Mucosa of descending colon (tissue), 3 donors: ENCODE measurements at regions of chr9 and their contacts with region 1.

Region 1: GRCh38 chr9:136327313-136327974 is at the start of gene GPSM1:
- DNase-seq: no peak
- ATAC-seq: peak; percentile 33
- H3K4me3 ChIP-seq: no peak within 1 kb of the TSS
- H3K4me1 ChIP-seq: peaks cover 5% of the 10 kb centered on the region
- CTCF ChIP-seq: no peak
- total RNA-seq, gene GPSM1: 2.4 to 15.0 (median 4.2) TPM

Region 2: DNA sequence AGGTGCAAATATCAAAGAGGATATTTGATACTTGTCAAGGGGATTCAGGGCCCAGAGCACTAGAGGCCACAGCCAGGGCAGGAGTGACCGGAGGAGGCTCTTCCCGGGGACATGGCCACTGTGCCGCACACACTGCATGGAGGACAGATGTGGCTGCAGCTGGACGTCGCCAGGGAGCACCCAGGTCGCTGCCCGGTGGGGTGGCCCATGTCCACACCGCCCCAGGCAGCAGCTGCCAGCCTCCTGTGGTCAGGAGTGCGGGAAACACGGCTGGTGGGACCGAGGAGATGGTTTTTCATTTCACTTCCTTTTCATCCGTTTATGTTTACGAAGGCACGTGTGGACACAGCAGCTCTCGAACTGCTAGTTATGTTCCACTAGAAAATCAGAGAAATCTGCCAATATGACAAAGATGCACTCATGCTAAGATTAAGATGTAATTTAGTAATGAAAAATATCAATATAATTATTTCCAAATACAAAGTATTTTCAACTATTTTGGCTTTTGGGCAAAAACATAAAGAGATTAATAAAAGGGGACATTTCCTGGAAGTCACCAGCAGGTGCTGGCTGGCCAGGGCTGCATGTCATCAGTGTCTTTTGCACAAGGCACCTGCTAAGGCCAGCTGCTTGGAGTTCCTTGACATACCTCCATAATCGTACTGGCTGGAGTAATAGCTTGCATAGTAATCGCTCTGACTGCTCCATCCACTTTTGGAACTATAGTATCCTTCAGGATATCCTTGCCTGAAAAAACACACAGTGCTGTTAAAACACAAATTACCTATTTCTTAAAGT is 140.5 kb after region 1 on chr9:
- intact Hi-C with region 1: loop called in 1 of 2 experiments (anchors 5 kb)
- DNase-seq: no peak
- ATAC-seq: no peak
- H3K4me3 ChIP-seq: no peak overlapping the region
- H3K4me1 ChIP-seq: no peaks in the 10 kb centered on the region
- CTCF ChIP-seq: no peak